ENCODE measurements at regions of chr16 and their contacts with region 1.

Region 1: DNA sequence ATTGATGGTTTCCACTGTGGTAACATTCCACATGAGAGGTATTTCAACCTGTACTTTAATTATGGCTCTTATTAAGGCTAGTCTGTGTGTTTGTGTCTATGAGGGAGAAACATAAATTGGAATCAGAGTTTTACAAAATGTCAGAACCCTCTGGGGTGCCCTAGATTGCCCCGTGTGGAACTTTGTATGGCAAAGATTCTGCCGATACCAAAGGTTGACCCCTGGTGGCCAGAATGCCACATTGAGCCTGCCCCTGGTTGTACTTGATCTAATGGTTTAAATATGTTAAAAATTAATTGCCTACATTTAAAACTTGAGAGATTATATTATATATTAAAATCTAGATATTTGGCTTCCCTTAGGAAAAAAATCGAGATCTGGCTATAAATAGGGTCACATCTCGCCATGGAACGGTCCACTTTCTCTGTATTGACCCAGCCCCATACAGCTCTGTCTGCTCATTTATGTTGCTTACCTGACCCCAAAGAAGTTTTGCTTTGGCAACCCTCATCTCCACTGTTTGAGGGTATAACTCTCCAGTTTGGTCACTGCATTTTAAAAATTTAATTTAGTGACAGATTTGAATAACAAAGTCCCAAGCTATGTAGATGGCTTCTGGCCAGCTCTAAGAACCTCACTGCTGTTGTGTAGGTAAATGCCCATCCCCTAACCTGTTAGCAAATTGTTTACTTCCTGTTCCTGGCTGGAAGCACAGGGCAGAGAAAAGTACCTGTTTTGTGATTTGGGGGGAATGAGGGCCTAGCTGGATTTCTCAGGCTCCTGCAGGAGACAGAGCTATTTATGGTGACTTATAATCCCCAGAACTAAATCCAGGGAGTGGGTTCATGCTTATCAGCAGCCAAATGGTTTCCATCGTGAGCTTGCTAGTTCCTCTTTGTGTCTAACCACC is 95.0 kb downstream of the PLCG2 start:
- DNase-seq: peak; percentile 55 to 75
- H3K4me3 ChIP-seq: no peak overlapping the region
- H3K4me3 Mint-ChIP-seq: no peak overlapping the region
- H3K27ac Mint-ChIP-seq: no peak overlapping the region
- H3K4me1 ChIP-seq: no peaks in the 10 kb centered on the region
- H3K4me1 Mint-ChIP-seq: no peaks in the 10 kb centered on the region
- H3K27me3 ChIP-seq: no peaks in the 10 kb centered on the region
- H3K27me3 Mint-ChIP-seq: no peaks in the 10 kb centered on the region
- CTCF ChIP-seq: peak; percentile 94 to 97

Region 2: DNA sequence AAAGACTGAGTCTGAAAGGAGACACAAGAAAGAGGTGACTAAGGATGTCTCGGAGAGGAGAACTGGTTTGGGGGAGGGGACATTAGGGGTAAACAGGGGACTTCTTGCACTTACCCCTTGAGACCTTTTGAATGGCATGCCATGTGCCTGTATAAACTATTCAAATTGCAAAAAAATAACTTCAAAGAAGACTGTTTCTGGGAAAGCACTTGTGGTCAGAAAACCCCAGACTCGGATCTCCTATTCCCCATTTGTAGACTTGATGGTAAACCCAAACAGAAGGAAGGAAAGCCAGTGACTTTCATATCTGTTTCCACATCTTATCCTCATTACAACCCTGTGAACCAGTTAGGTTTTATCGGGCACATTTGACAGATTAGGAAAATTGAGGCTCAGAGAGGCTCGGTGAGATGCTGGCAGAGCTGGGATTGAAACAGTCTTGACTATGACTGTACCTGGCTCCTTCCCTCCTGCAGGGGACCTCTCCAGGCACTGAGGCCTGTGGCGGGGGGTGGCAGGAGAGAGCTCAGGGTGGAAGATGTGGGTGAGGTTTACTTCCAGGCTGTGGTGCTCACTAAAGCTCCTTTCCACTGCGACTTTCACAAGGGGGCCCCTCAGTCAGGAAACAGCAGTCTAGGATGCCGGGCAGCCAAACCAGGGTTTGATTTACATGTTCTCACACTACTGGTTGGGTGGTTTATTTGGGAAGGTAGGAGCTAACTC is 125.5 kb before region 1 on chr16:
- CTCF ChIA-PET with region 1: interaction called, 3 read pairs
- POLR2A ChIA-PET with region 1: no interaction called
- intact Hi-C with region 1: loop called (anchors 2 kb)
- DNase-seq: peak in 1 of 2 experiments; percentile 34
- H3K4me3 ChIP-seq: no peak overlapping the region
- H3K4me3 Mint-ChIP-seq: no peak overlapping the region
- H3K27ac Mint-ChIP-seq: no peak overlapping the region
- H3K4me1 ChIP-seq: no peaks in the 10 kb centered on the region
- H3K4me1 Mint-ChIP-seq: no peaks in the 10 kb centered on the region
- H3K27me3 ChIP-seq: no peaks in the 10 kb centered on the region
- H3K27me3 Mint-ChIP-seq: no peaks in the 10 kb centered on the region
- CTCF ChIP-seq: peak in 1 of 2 experiments; percentile 30

Region 3: DNA sequence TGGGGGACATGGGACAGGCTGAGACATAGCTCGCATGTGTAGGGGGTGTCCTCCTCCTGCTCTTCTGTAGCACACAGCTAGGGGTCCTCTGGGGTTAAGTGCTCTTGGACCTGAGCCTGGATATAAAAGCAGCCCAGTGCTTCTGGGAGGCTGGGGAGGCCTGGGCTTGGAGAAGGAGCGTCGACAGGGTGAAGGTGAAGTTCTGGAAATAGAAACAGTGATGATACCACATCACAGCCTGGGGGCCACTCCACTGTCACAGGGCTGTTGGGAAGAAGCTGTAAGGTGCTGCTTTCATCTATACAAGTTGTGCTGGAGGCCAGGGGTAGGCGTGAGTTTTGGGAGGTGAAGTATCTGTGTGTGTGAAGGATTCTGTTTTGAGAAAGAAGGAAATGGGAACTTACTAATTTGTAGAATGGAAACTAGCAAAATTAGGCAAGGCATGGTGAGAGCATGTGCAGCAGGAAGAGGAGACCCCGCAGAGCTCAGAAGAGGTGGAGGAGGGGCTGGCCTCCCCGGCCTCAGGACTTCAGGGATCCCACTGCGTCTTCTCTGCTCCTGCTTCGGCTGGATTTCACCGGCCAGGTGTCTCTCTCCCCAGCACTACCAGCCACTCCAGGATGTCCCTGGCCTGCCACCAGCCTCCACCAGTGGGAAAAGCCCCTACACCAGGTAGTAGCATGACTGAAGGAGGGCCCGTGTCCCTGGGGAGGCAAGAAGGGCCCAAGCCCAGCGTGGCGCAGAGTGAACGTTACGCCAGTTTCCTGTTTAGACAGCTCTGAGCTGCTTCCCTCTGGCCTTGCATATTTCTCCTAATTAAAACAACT is 75.6 kb before region 1 on chr16:
- CTCF ChIA-PET with region 1: no interaction called
- POLR2A ChIA-PET with region 1: no interaction called
- intact Hi-C with region 1: loop called (anchors 5 kb)
- DNase-seq: no peak
- H3K4me3 ChIP-seq: no peak overlapping the region
- H3K4me3 Mint-ChIP-seq: no peak overlapping the region
- H3K27ac Mint-ChIP-seq: no peak overlapping the region
- H3K4me1 ChIP-seq: no peaks in the 10 kb centered on the region
- H3K4me1 Mint-ChIP-seq: no peaks in the 10 kb centered on the region
- H3K27me3 ChIP-seq: no peaks in the 10 kb centered on the region
- H3K27me3 Mint-ChIP-seq: no peaks in the 10 kb centered on the region
- CTCF ChIP-seq: no peak

Region 4: GRCh38 chr16:81831722-81832126 is 42.4 kb before region 1 on chr16:
- CTCF ChIA-PET with region 1: no interaction called
- POLR2A ChIA-PET with region 1: no interaction called
- intact Hi-C with region 1: loop called (anchors 1 kb)
- DNase-seq: no peak
- H3K4me3 ChIP-seq: no peak overlapping the region
- H3K4me3 Mint-ChIP-seq: no peak overlapping the region
- H3K27ac Mint-ChIP-seq: no peak overlapping the region
- H3K4me1 ChIP-seq: peaks cover 7% of the 10 kb centered on the region; the same call in 1 of the 2 replicates
- H3K4me1 Mint-ChIP-seq: no peaks in the 10 kb centered on the region
- H3K27me3 ChIP-seq: no peaks in the 10 kb centered on the region
- H3K27me3 Mint-ChIP-seq: no peaks in the 10 kb centered on the region
- CTCF ChIP-seq: no peak

Region 5: DNA sequence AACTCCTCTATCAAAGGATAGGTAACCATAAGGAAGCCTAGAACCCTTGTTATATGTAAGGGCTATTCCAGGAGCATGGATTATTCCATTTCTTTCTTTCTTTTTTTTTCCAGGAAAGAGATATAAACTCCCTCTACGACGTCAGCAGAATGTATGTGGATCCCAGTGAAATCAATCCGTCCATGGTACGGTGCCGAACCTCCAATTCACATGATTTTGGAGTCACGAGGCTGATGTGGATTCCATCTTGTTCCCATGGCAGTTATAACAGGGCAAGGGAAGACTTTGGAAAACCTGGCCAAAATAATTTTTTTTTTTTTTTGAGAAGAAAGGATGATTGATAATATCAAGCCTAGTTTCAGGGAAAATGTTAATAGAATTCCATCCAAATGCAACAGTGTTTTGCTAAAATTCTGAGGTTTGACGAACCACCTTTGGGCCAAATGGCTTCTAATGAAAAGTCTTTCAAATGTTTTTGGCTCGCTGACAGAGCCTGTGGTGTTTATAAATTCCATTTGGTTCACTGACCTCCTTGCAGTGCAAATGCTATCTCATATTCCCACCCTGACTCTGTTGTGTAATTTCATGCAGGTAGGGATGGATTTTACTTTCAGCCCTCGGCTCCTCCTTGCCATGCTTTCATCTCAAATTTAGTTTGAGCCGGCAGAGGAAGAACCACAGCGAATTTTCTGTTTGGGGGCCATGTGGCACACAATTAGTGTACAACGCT is 47.2 kb after region 1 on chr16:
- CTCF ChIA-PET with region 1: no interaction called
- POLR2A ChIA-PET with region 1: no interaction called
- intact Hi-C with region 1: no loop called
- DNase-seq: no peak
- H3K4me3 ChIP-seq: no peak overlapping the region
- H3K4me3 Mint-ChIP-seq: no peak overlapping the region
- H3K27ac Mint-ChIP-seq: no peak overlapping the region
- H3K4me1 ChIP-seq: no peaks in the 10 kb centered on the region
- H3K4me1 Mint-ChIP-seq: no peaks in the 10 kb centered on the region
- H3K27me3 ChIP-seq: no peaks in the 10 kb centered on the region
- H3K27me3 Mint-ChIP-seq: no peaks in the 10 kb centered on the region
- CTCF ChIP-seq: no peak

Region 6: DNA sequence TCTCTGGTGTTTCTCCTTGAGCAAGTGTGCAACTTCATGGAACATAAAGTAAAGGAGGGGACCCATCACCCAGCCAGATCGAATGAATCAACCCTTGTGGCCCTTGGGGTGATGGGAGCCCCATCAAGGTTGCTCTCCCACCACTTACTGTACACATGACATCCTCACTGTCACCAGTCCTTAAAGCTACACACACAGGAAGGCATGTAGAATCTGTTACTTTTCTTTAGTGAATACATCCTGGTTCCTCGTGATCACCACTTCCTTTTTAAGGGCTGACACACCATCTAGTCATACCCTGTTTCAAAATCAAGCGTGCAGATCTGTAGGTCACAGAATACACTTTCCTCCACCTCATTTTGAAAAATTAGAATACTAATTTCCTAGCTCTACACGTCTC is 318.6 kb after region 1 on chr16:
- CTCF ChIA-PET with region 1: no interaction called
- POLR2A ChIA-PET with region 1: no interaction called
- intact Hi-C with region 1: no loop called
- DNase-seq: no peak
- H3K4me3 ChIP-seq: no peak overlapping the region
- H3K4me3 Mint-ChIP-seq: no peak overlapping the region
- H3K27ac Mint-ChIP-seq: no peak overlapping the region
- H3K4me1 ChIP-seq: 0 out of 2 replicates have a peak, but pooled peaks cover 3% of the 10 kb centered on the region
- H3K4me1 Mint-ChIP-seq: peaks cover 6% of the 10 kb centered on the region
- H3K27me3 ChIP-seq: no peaks in the 10 kb centered on the region; the same call in 1 of the 2 replicates
- H3K27me3 Mint-ChIP-seq: peaks cover 17% of the 10 kb centered on the region
- CTCF ChIP-seq: no peak